ENCODE measurements at regions of chr5 and their contacts with region 1.

Region 1: GRCh38 chr5:93062548-93062947 is 518.5 kb downstream of the NR2F1-AS1 start:
- DNase-seq: no peak
- H3K4me3 ChIP-seq: no peak overlapping the region
- H3K27ac ChIP-seq: no peak overlapping the region
- H3K27me3 ChIP-seq: no peaks in the 10 kb centered on the region
- CTCF ChIP-seq: peak in 45 of 56 donors; percentile 9 to 65 (median 38)

Region 2: DNA sequence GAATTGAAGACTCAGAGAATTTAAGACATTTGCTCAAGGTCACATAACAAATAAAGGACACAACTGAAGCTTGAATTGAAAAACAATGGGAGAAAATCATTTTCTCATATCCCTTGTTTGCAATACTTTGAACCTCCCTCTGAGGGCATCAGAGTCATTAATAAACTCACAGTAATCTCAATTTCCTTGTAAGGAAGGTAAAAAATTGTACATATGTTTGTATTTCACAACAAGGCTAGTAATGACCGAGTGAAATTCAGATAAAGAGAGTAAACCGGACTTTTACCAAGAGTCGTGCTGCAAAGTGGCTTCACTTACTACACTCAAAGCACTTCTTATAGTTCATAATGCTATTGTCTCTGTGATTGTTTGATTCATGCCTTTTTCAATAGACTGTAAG is 146.5 kb before region 1 on chr5:
- intact Hi-C with region 1: loop called (anchors 5 to 10 kb)
- DNase-seq: no peak
- H3K4me3 ChIP-seq: no peak overlapping the region
- H3K27ac ChIP-seq: no peak overlapping the region
- H3K27me3 ChIP-seq: no peaks in the 10 kb centered on the region
- CTCF ChIP-seq: peak in 52 of 56 donors; percentile 13 to 72 (median 44)

Region 3: DNA sequence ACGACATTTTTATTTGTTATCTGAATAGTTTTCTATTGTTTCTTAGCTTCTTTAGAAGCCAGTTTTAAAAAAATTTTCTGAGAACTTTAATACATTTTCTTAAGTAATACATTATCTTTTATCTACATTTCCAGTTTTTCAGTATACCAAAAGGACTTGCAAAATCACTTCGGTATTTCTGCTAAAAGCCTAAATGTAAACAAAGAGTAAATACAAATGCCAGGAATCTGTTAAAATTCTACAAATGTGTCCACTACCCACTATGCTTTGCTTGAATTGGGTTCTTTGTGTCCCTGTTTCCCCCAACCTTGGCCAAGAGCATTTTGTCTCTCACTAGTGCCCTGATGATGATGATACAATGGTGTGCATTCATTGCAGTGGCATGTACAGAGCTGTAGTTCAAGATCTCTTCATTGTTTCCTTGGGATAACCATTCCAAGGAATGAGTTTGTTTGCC is 92.7 kb before region 1 on chr5:
- intact Hi-C with region 1: loop called in 1 of 2 experiments (anchors 10 kb)
- DNase-seq: peak in 2 of 10 donors; percentile 52 to 59
- H3K4me3 ChIP-seq: peak overlapping the region in 12 of 59 donors; percentile 8 to 38 (median 18)
- H3K27ac ChIP-seq: peak overlapping the region in 58 of 59 donors; percentile 11 to 95 (median 84)
- H3K27me3 ChIP-seq: no peaks in the 10 kb centered on the region
- CTCF ChIP-seq: peak in 4 of 56 donors; percentile 3 to 26 (median 9)